ENCODE measurements at regions of chr12 and their contacts with region 1.

Region 1: DNA sequence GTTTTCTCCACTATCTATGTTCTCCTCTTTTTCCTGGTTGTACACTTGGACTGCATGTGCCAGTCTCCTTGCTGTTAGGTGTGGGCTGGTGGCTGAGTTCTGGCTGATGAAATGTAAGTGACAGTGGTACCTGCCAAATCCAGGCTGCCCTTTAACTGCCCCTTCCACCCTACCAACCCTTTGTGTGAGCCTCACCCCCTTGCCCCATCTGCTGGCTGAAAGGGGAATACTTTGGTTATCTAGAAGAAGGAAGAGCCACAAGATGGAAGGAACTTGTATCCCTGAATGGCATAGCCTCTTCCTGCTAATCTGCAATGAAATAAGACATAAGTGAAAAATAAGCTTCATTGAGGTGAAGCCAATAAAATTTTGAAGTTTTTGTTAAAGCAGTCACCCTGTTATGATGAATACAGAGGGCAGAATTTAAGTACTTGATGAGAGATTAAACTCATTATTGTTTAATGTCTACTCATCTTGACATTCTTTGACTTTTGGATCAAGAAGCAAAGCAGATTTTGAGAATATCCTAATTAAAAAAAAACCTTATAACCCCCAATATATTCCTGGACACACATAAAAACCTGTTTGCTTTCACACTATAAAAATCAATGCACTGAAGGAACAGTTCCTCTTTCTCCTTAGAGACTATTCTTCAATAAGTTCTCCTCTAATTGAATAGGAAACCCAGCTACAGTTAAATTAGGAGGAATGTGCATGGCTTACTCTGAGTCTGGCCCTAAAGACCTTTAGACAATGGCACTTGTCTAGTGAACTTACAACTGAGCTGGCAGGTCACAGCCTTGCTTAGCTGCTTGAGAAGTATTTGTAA is 262.6 kb upstream of the BTG1 start:
- DNase-seq: no peak
- ATAC-seq: peak; percentile 74
- H3K4me3 ChIP-seq: no peak overlapping the region
- H3K27ac ChIP-seq: peak overlapping the region; percentile 24
- H3K4me1 ChIP-seq: peaks cover 31% of the 10 kb centered on the region
- H3K27me3 ChIP-seq: no peaks in the 10 kb centered on the region
- CTCF ChIP-seq: peak; percentile 58 to 82 (median 72)
- EP300 ChIP-seq: no peak
- POLR2A ChIP-seq: no peak
- RAD21 ChIP-seq: peak; percentile 94

Region 2: GRCh38 chr12:91382081-91382543 is 1026.2 kb before region 1 on chr12:
- CTCF ChIA-PET with region 1: interaction called, 6 read pairs
- POLR2A ChIA-PET with region 1: no interaction called
- RAD21 ChIA-PET with region 1: interaction called, 5 read pairs
- SMC1A ChIA-PET with region 1: no interaction called
- in situ Hi-C with region 1: no loop called
- intact Hi-C with region 1: loop called (anchors 2 kb)
- DNase-seq: peak; percentile 54
- ATAC-seq: peak; percentile 95
- H3K4me3 ChIP-seq: peak overlapping the region; percentile 68
- H3K27ac ChIP-seq: peak overlapping the region; percentile 37; the same call in 1 of the 2 replicates
- H3K4me1 ChIP-seq: peaks cover 3% of the 10 kb centered on the region; the same call in 1 of the 2 replicates
- H3K27me3 ChIP-seq: no peaks in the 10 kb centered on the region
- CTCF ChIP-seq: peak; percentile 80 to 89 (median 87)
- EP300 ChIP-seq: no peak
- POLR2A ChIP-seq: no peak
- RAD21 ChIP-seq: peak; percentile 92

Region 3: GRCh38 chr12:92034858-92035401 is 373.4 kb before region 1 on chr12:
- CTCF ChIA-PET with region 1: interaction called, 3 read pairs
- POLR2A ChIA-PET with region 1: no interaction called
- RAD21 ChIA-PET with region 1: interaction called, 9 read pairs
- SMC1A ChIA-PET with region 1: interaction called, 3 read pairs
- in situ Hi-C with region 1: no loop called
- intact Hi-C with region 1: loop called (anchors 5 kb)
- DNase-seq: peak; percentile 99
- ATAC-seq: peak; percentile 84
- H3K4me3 ChIP-seq: peak overlapping the region; percentile 27
- H3K27ac ChIP-seq: peak overlapping the region; percentile 80
- H3K4me1 ChIP-seq: peaks cover 13% of the 10 kb centered on the region
- H3K27me3 ChIP-seq: no peaks in the 10 kb centered on the region
- CTCF ChIP-seq: no peak
- EP300 ChIP-seq: peak; percentile 89 to 90
- POLR2A ChIP-seq: peak; percentile 36; the same call in 1 of the 2 replicates
- RAD21 ChIP-seq: peak; percentile 41

Region 4: DNA sequence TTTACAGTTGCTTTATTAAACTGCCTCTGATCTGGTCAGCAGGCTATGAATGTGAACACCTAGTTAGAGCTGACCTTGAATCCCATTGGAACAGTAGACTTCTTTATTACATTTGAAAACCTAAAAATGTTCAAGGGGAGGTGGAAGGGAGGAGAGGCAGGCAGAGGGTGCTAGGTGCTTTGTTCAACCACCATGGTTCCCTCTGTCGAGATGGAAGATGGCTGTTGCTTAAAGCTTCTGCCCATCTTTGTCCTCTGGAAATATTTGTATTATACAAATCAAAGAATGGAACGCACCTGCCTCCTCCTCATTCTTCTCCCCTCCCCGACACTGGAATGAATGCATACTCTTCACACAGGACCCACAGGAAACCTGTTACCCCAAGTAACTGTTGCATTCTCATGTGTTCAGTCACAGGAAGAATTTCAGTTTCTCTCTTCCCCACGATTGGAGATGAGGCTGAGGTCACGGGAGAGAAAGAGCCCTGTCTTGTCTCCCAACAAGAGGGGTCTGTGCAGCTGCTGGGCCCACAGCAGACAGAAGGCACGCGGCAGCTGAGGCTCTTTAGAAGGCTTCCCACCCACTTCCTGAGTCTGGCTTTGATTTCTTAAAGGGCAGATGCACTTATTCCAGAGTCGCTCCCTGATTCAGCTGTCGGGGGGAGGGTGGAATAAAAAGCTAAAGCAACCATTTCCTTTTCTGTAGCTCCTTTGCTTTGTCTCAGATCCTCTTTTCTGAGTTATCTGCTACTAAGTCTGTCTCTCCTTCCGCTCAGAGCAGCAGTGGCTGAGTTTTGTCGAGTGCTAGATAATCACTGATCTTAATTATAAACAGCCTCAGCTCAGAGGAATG is 44.8 kb before region 1 on chr12:
- CTCF ChIA-PET with region 1: interaction called, 20 read pairs
- POLR2A ChIA-PET with region 1: interaction called, 40 read pairs
- RAD21 ChIA-PET with region 1: interaction called, 71 read pairs
- SMC1A ChIA-PET with region 1: interaction called, 78 read pairs
- in situ Hi-C with region 1: no loop called
- intact Hi-C with region 1: loop called (anchors 1 kb)
- DNase-seq: peak; percentile 96
- ATAC-seq: peak; percentile 82
- H3K4me3 ChIP-seq: peak overlapping the region; percentile 62
- H3K27ac ChIP-seq: peak overlapping the region; percentile 99
- H3K4me1 ChIP-seq: peaks cover 17% of the 10 kb centered on the region; the same call in 1 of the 2 replicates
- H3K27me3 ChIP-seq: no peaks in the 10 kb centered on the region
- CTCF ChIP-seq: no peak
- EP300 ChIP-seq: peak; percentile 60 to 79; a peak in 3 of 4 replicates
- POLR2A ChIP-seq: peak; percentile 83
- RAD21 ChIP-seq: peak; percentile 12; the same call in 1 of the 2 replicates

Region 5: GRCh38 chr12:92431146-92431545 is 22.9 kb after region 1 on chr12:
- CTCF ChIA-PET with region 1: interaction called, 53 read pairs
- POLR2A ChIA-PET with region 1: interaction called, 6 read pairs
- RAD21 ChIA-PET with region 1: interaction called, 41 read pairs
- SMC1A ChIA-PET with region 1: interaction called, 145 read pairs
- in situ Hi-C with region 1: no loop called
- intact Hi-C with region 1: loop called (anchors 2 kb)
- DNase-seq: no peak
- ATAC-seq: peak; percentile 64
- H3K4me3 ChIP-seq: no peak overlapping the region
- H3K27ac ChIP-seq: peak overlapping the region; percentile 10
- H3K4me1 ChIP-seq: peaks cover 46% of the 10 kb centered on the region
- H3K27me3 ChIP-seq: no peaks in the 10 kb centered on the region
- CTCF ChIP-seq: peak; percentile 6 to 42 (median 40); a peak in 3 of 6 replicates
- EP300 ChIP-seq: no peak
- POLR2A ChIP-seq: no peak
- RAD21 ChIP-seq: peak; percentile 61

Region 6: GRCh38 chr12:92466391-92467305 is 58.4 kb after region 1 on chr12:
- CTCF ChIA-PET with region 1: interaction called, 11 read pairs
- POLR2A ChIA-PET with region 1: interaction called, 9 read pairs
- RAD21 ChIA-PET with region 1: interaction called, 16 read pairs
- SMC1A ChIA-PET with region 1: interaction called, 24 read pairs
- in situ Hi-C with region 1: no loop called
- intact Hi-C with region 1: loop called (anchors 1 kb)
- DNase-seq: peak; percentile 90
- ATAC-seq: peak; percentile 39
- H3K4me3 ChIP-seq: peak overlapping the region; percentile 82
- H3K27ac ChIP-seq: peak overlapping the region; percentile 99
- H3K4me1 ChIP-seq: peaks cover 62% of the 10 kb centered on the region
- H3K27me3 ChIP-seq: no peaks in the 10 kb centered on the region
- CTCF ChIP-seq: no peak
- EP300 ChIP-seq: peak; percentile 65 to 70; a peak in 3 of 4 replicates
- POLR2A ChIP-seq: peak; percentile 85
- RAD21 ChIP-seq: peak; percentile 5

Region 7: DNA sequence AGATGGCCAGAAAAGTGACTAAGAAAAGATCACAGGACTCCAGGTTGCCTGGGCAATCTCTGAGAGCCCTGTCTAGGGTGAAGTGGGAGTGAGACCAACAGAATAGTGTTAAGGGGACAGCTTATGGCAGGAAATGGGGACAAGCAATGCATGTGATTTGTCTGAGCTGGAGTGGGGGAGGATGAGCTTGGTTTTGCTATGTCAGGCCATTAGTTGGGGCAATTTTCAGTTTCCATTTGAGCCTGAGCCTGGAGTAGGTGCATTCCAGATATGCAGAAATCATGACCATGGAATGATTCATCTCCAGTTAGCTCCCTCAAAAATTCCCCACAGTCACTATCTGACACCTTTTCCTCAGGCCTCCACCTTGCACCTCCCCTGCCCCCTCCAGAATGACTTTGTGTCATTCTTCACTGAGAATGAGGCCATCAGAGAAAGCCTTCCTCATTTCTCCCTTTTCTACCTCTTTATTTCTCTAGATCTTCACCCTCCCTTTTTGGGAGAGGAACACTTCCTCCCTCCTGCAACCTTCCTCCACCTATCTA is 143.6 kb after region 1 on chr12:
- CTCF ChIA-PET with region 1: no interaction called
- POLR2A ChIA-PET with region 1: interaction called, 5 read pairs
- RAD21 ChIA-PET with region 1: interaction called, 7 read pairs
- SMC1A ChIA-PET with region 1: interaction called, 15 read pairs
- in situ Hi-C with region 1: no loop called
- intact Hi-C with region 1: no loop called
- DNase-seq: peak; percentile 98
- ATAC-seq: peak; percentile 75
- H3K4me3 ChIP-seq: peak overlapping the region; percentile 17; the same call in 1 of the 2 replicates
- H3K27ac ChIP-seq: peak overlapping the region; percentile 98
- H3K4me1 ChIP-seq: peaks cover 67% of the 10 kb centered on the region
- H3K27me3 ChIP-seq: no peaks in the 10 kb centered on the region
- CTCF ChIP-seq: no peak
- EP300 ChIP-seq: peak; percentile 92 to 97
- POLR2A ChIP-seq: peak; percentile 57
- RAD21 ChIP-seq: no peak

Region 8: GRCh38 chr12:93137656-93138612 is 729.6 kb after region 1 on chr12:
- CTCF ChIA-PET with region 1: no interaction called
- POLR2A ChIA-PET with region 1: no interaction called
- RAD21 ChIA-PET with region 1: no interaction called
- SMC1A ChIA-PET with region 1: no interaction called
- in situ Hi-C with region 1: no loop called
- intact Hi-C with region 1: no loop called
- DNase-seq: no peak
- ATAC-seq: peak; percentile 77
- H3K4me3 ChIP-seq: no peak overlapping the region
- H3K27ac ChIP-seq: peak overlapping the region; percentile 59; the same call in 1 of the 2 replicates
- H3K4me1 ChIP-seq: peaks cover 45% of the 10 kb centered on the region
- H3K27me3 ChIP-seq: no peaks in the 10 kb centered on the region
- CTCF ChIP-seq: no peak
- EP300 ChIP-seq: no peak; a peak in 1 of 4 replicates
- POLR2A ChIP-seq: no peak
- RAD21 ChIP-seq: no peak